ENCODE measurements at regions of chr2 and their contacts with region 1.

Region 1: GRCh38 chr2:48107326-48107925 is 201.1 kb upstream of the FBXO11 start:
- DNase-seq: peak; percentile 76
- H3K4me3 ChIP-seq: no peak overlapping the region
- H3K27ac ChIP-seq: peak overlapping the region; percentile 77
- H3K4me1 ChIP-seq: peaks cover 30% of the 10 kb centered on the region
- H3K27me3 ChIP-seq: no peaks in the 10 kb centered on the region
- CTCF ChIP-seq: no peak
- POLR2A ChIP-seq: no peak

Region 2: GRCh38 chr2:47339745-47340541 is 767.5 kb before region 1 on chr2:
- CTCF ChIA-PET with region 1: interaction called, 4 read pairs
- POLR2A ChIA-PET with region 1: no interaction called
- dilution Hi-C with region 1: no loop called
- intact Hi-C with region 1: loop called (anchors 5 kb)
- DNase-seq: no peak
- H3K4me3 ChIP-seq: no peak overlapping the region
- H3K27ac ChIP-seq: no peak overlapping the region
- H3K4me1 ChIP-seq: peaks cover 5% of the 10 kb centered on the region
- H3K27me3 ChIP-seq: no peaks in the 10 kb centered on the region
- CTCF ChIP-seq: no peak
- POLR2A ChIP-seq: no peak

Region 3: GRCh38 chr2:47782671-47783485 is 324.5 kb before region 1 on chr2 and contains the start of gene MSH6:
- CTCF ChIA-PET with region 1: interaction called, 7 read pairs
- POLR2A ChIA-PET with region 1: no interaction called
- dilution Hi-C with region 1: no loop called
- intact Hi-C with region 1: loop called (anchors 1 kb)
- DNase-seq: peak; percentile 90
- H3K4me3 ChIP-seq: peak within 1 kb of the TSS; percentile 64 to 92 (median 89)
- H3K27ac ChIP-seq: peak within 1 kb of the TSS; percentile 77
- H3K4me1 ChIP-seq: peaks cover 9% of the 10 kb centered on the region
- H3K27me3 ChIP-seq: no peaks in the 10 kb centered on the region
- CTCF ChIP-seq: no peak
- POLR2A ChIP-seq: peak; percentile 71
- total RNA-seq, gene MSH6: 59.3 and 74.0 TPM in 2 replicates

Region 4: DNA sequence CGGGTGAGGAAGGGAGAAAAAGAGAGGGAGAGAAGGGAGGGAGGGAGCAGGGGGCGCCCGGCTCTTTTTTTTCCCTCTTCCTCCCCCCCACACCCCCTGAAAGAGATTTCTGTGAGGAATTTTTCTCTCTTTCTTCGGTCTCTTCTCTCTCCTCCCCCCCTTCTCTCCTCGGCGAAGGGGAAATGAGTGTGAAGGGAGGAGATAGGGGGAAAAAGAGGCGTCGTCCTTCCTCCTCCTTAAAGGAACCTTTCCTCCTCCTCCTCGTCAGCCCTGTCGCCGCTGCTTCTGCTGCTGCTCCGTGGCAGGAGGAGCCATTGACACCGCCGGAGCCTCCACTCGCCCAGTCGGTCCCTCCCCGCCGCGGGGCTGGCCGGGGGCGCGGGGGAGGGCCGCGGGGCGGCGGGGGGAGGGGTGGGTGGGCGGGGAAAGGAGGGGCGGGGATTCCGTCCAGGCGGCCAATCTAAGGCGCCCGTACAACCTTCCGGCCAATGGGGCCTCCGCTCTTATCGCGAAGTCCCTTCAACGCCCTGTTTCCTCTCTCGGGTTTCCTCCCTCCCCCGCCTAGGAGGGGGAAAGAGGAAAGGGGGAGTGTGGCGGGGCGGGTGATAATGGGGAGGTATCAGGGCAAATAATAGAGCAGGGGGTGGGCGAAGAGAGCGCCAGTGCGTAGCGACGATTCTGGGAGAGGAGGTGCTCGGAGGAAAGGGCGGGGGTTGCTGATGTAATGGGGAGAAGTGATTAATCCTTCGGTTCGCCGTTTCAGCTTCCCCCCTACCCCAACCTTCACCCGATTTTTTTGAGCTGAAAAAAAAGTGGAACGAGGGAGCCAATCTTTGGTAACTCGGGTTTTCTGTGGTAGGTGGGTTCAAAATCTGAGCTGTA is 201.0 kb before region 1 on chr2 and contains the start of gene FBXO11:
- CTCF ChIA-PET with region 1: interaction called, 22 read pairs
- POLR2A ChIA-PET with region 1: no interaction called
- dilution Hi-C with region 1: no loop called
- intact Hi-C with region 1: loop called (anchors 1 kb)
- DNase-seq: peak; percentile 99
- H3K4me3 ChIP-seq: peak within 1 kb of the TSS; percentile 87 to 99 (median 88)
- H3K27ac ChIP-seq: peak within 1 kb of the TSS; percentile 90
- H3K4me1 ChIP-seq: peaks cover 20% of the 10 kb centered on the region
- H3K27me3 ChIP-seq: no peaks in the 10 kb centered on the region
- CTCF ChIP-seq: peak; percentile 51 to 65
- POLR2A ChIP-seq: peak; percentile 63
- total RNA-seq, gene FBXO11: 59.6 and 65.0 TPM in 2 replicates

Region 5: DNA sequence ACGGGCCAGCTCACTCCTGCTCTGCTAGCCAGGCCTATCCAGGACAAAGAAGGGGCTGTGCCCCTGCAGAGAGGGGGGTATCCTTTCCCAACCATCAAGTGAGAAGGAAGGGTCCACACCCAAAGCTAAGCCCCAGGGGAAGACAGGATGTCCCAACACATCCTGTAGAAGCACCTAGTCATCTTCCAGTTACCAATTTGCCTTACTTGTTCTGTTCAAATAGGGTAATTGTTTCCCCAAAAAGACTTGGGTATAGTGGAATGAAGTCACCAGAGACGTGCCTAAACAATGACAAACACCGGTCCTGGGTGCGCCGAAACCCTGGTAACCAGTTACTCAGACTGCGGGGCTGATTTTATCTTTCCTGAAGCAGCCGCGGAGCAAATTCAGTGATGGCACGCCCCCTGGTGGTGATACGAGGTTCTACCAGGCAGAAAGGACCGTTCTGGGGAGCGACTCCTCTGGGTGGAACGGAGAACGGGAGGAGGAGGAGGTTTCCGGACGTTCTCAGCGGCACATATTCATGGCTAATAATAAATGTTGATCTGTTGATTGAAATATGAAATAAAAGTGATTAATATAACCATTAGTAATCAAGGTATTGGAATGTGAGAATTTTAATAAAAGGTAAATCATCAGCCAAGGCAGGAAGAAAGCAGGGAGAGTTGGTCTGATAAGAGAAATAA is 313.2 kb after region 1 on chr2:
- CTCF ChIA-PET with region 1: interaction called, 14 read pairs
- POLR2A ChIA-PET with region 1: no interaction called
- dilution Hi-C with region 1: no loop called
- intact Hi-C with region 1: loop called (anchors 1 kb)
- DNase-seq: peak; percentile 85
- H3K4me3 ChIP-seq: peak overlapping the region in 1 of 3 experiments; percentile 8
- H3K27ac ChIP-seq: peak overlapping the region; percentile 39
- H3K4me1 ChIP-seq: peaks cover 5% of the 10 kb centered on the region
- H3K27me3 ChIP-seq: no peaks in the 10 kb centered on the region
- CTCF ChIP-seq: peak; percentile 88 to 93
- POLR2A ChIP-seq: no peak